T-cell (primary cell): ENCODE measurements at regions of chr7 and their contacts with region 1.

Region 1: GRCh38 chr7:50369143-50370026 is 64.9 kb downstream of the IKZF1 start:
- DNase-seq: peak in 25 of 35 experiments; percentile 32 to 92 (median 53)
- ATAC-seq: peak; percentile 48 to 64 (median 51)
- H3K4me3 ChIP-seq: no peak overlapping the region
- H3K4me3 Mint-ChIP-seq: peak overlapping the region in 2 of 3 donors; percentile 4 to 49
- H3K27ac ChIP-seq: peak overlapping the region; percentile 96
- H3K27ac Mint-ChIP-seq: peak overlapping the region; percentile 89 to 99
- H3K4me1 ChIP-seq: peaks cover 69 to 80% of the 10 kb centered on the region in 2 experiments
- H3K4me1 Mint-ChIP-seq: peaks cover 98 to 99% (median 98%) of the 10 kb centered on the region in 3 donors
- H3K27me3 ChIP-seq: no peaks in the 10 kb centered on the region
- H3K27me3 Mint-ChIP-seq: no peaks in the 10 kb centered on the region

Region 2: GRCh38 chr7:50142425-50143017 is 226.9 kb before region 1 on chr7:
- CTCF ChIA-PET with region 1: interaction called, 3 to 17 read pairs
- POLR2A ChIA-PET with region 1: no interaction called
- DNase-seq: peak in 13 of 35 experiments; percentile 14 to 81 (median 30)
- ATAC-seq: peak in 3 of 4 experiments; percentile 46 to 81 (median 74)
- H3K4me3 ChIP-seq: no peak overlapping the region
- H3K4me3 Mint-ChIP-seq: peak overlapping the region; percentile 39 to 57 (median 57)
- H3K27ac ChIP-seq: peak overlapping the region; percentile 7
- H3K27ac Mint-ChIP-seq: peak overlapping the region; percentile 80 to 84
- H3K4me1 ChIP-seq: peaks cover 3 to 24% of the 10 kb centered on the region in 2 experiments
- H3K4me1 Mint-ChIP-seq: peaks cover 21 to 32% (median 26%) of the 10 kb centered on the region in 3 donors
- H3K27me3 ChIP-seq: no peaks in the 10 kb centered on the region
- H3K27me3 Mint-ChIP-seq: no peaks in the 10 kb centered on the region

Region 3: DNA sequence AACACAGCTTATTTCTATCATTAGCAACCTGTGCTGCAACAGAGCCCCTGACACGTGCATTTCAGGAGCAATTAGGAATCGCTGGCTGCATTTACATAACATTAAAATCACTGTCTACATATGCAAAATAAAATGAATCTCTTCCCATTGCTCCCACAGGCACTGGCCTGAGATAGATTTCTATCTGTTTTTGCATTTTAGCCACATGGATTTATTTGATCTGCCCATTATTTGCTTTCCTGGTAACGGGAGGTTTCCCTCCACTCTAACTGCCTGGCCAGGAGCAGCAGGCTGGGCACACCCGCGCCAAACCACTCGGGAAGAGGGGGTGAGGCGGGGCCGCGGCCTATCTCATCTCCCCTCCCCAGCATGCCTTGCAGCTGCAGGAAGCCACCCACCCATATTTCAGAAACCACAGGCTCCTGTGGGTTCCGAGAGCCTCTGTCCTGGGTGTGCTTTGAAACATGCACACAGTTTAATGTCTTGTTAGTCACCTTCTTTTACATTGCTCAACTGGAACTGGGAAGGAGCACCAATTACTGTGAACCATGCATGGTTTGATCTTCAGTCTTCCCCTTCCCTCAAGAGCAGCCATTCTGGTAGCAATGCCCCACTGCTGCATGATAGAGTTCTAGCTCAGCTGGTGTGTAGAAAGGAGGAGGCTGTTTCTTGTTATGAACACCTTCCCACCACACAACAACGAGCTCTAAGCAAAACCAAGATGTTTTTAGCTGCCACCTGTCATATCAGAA is 102.6 kb before region 1 on chr7:
- CTCF ChIA-PET with region 1: interaction called, 8 to 10 read pairs
- POLR2A ChIA-PET with region 1: no interaction called
- DNase-seq: peak; percentile 53 to 85 (median 70)
- ATAC-seq: peak; percentile 85 to 89 (median 86)
- H3K4me3 ChIP-seq: peak overlapping the region; percentile 12 to 17
- H3K4me3 Mint-ChIP-seq: peak overlapping the region; percentile 67 to 87 (median 70)
- H3K27ac ChIP-seq: peak overlapping the region; percentile 87
- H3K27ac Mint-ChIP-seq: peak overlapping the region; percentile 98 to 100
- H3K4me1 ChIP-seq: peaks cover 85 to 87% of the 10 kb centered on the region in 2 experiments
- H3K4me1 Mint-ChIP-seq: peaks cover 95 to 98% (median 96%) of the 10 kb centered on the region in 3 donors
- H3K27me3 ChIP-seq: no peaks in the 10 kb centered on the region
- H3K27me3 Mint-ChIP-seq: no peaks in the 10 kb centered on the region

Region 4: DNA sequence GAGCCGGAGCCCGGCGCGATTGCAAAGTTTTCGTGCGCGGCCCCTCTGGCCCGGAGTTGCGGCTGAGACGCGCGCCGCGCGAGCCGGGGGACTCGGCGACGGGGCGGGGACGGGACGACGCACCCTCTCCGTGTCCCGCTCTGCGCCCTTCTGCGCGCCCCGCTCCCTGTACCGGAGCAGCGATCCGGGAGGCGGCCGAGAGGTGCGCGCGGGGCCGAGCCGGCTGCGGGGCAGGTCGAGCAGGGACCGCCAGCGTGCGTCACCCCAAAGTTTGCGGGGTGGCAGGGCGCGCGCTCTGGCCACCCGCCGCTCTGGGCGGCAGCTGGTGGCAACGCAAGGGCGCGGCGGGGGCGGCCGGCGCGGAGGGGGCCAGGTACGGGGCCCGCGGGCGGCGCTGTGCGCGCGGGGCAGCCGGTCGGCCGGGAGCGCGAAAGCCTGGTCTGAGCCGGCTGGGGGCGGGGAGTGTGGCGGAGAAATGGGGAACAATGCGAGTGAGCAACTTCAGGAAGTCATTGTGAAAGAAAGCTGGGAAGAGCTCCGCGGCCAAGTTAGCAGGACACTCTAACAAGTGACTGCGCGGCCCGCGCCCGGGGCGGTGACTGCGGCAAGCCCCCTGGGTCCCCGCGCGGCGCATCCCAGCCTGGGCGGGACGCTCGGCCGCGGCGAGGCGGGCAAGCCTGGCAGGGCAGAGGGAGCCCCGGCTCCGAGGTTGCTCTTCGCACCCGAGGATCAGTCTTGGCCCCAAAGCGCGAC is 65.1 kb before region 1 on chr7 and contains the start of gene IKZF1:
- CTCF ChIA-PET with region 1: interaction called, 3 to 72 read pairs
- POLR2A ChIA-PET with region 1: interaction called, 5 to 11 read pairs
- DNase-seq: peak in 30 of 35 experiments; percentile 35 to 72 (median 50)
- ATAC-seq: peak; percentile 43 to 57 (median 52)
- H3K4me3 ChIP-seq: peak within 1 kb of the TSS; percentile 68 to 74
- H3K4me3 Mint-ChIP-seq: peak within 1 kb of the TSS; percentile 95 to 99 (median 98)
- H3K27ac ChIP-seq: peak within 1 kb of the TSS; percentile 87
- H3K27ac Mint-ChIP-seq: peak within 1 kb of the TSS; percentile 95 to 100
- H3K4me1 ChIP-seq: peaks cover 32 to 39% of the 10 kb centered on the region in 2 experiments
- H3K4me1 Mint-ChIP-seq: peaks cover 55 to 69% (median 57%) of the 10 kb centered on the region in 3 donors
- H3K27me3 ChIP-seq: no peaks in the 10 kb centered on the region
- H3K27me3 Mint-ChIP-seq: no peaks in the 10 kb centered on the region
- total RNA-seq, gene IKZF1: 429 to 525 (median 494) TPM

Region 5: GRCh38 chr7:50335795-50336754 is 33.3 kb before region 1 on chr7:
- CTCF ChIA-PET with region 1: interaction called, 4 to 54 read pairs
- POLR2A ChIA-PET with region 1: interaction called, 4 to 22 read pairs
- DNase-seq: peak in 34 of 35 experiments; percentile 60 to 84 (median 73)
- ATAC-seq: peak; percentile 28 to 63 (median 58)
- H3K4me3 ChIP-seq: peak overlapping the region; percentile 16 to 45
- H3K4me3 Mint-ChIP-seq: no peak overlapping the region
- H3K27ac ChIP-seq: peak overlapping the region; percentile 88
- H3K27ac Mint-ChIP-seq: no peak overlapping the region
- H3K4me1 ChIP-seq: peaks cover 90 to 97% of the 10 kb centered on the region in 2 experiments
- H3K4me1 Mint-ChIP-seq: peaks cover 0 to 45% (median 0%) of the 10 kb centered on the region in 3 donors
- H3K27me3 ChIP-seq: no peaks in the 10 kb centered on the region
- H3K27me3 Mint-ChIP-seq: no peaks in the 10 kb centered on the region

Region 6: GRCh38 chr7:50349963-50350944 is 19.1 kb before region 1 on chr7:
- CTCF ChIA-PET with region 1: interaction called, 3 to 40 read pairs
- POLR2A ChIA-PET with region 1: interaction called, 5 to 7 read pairs
- DNase-seq: peak in 32 of 35 experiments; percentile 43 to 76 (median 60)
- ATAC-seq: peak; percentile 48 to 71 (median 70)
- H3K4me3 ChIP-seq: peak overlapping the region; percentile 11 to 20
- H3K4me3 Mint-ChIP-seq: peak overlapping the region; percentile 51 to 74 (median 67)
- H3K27ac ChIP-seq: peak overlapping the region; percentile 96
- H3K27ac Mint-ChIP-seq: peak overlapping the region; percentile 95 to 96
- H3K4me1 ChIP-seq: peaks cover 91% of the 10 kb centered on the region in 2 experiments
- H3K4me1 Mint-ChIP-seq: peaks cover 98 to 100% (median 99%) of the 10 kb centered on the region in 3 donors
- H3K27me3 ChIP-seq: no peaks in the 10 kb centered on the region
- H3K27me3 Mint-ChIP-seq: no peaks in the 10 kb centered on the region